ENCODE measurements at regions of chr14 and their contacts with region 1.

Region 1: DNA sequence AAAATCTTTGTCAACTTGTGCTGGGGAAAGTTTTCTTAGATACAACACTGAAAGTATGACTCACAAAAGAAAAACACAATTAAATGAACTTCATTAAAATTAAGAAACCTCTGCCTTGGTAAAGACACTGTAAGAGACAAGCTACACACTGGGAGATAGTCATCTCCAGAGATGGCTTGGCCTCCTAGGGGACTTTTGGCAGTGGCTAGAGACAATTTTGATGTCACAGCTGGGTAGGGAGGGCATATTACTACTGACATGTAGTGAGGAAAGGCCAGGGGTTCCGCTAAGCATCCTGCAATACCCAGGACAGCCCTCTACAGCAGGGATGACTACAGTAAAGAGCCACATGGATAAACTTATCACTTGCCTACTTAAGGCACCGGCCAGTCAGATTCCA is 8.7 kb upstream of the RNASE4 start:
- DNase-seq: no peak
- ATAC-seq: no peak
- H3K4me3 ChIP-seq: no peak overlapping the region
- H3K4me3 Mint-ChIP-seq: no peak overlapping the region
- H3K27ac ChIP-seq: no peak overlapping the region
- H3K27ac Mint-ChIP-seq: no peak overlapping the region
- H3K4me1 ChIP-seq: peaks cover 24 to 27% of the 10 kb centered on the region in 2 donors
- H3K4me1 Mint-ChIP-seq: peaks cover 28% of the 10 kb centered on the region
- H3K27me3 ChIP-seq: no peaks in the 10 kb centered on the region
- H3K27me3 Mint-ChIP-seq: no peaks in the 10 kb centered on the region
- CTCF ChIP-seq: no peak

Region 2: GRCh38 chr14:20662968-20663732 is 12.5 kb before region 1 on chr14:
- CTCF ChIA-PET with region 1: interaction called, 445 read pairs
- POLR2A ChIA-PET with region 1: interaction called, 42 read pairs
- intact Hi-C with region 1: no loop called
- DNase-seq: peak; percentile 90
- ATAC-seq: peak; percentile 85
- H3K4me3 ChIP-seq: peak overlapping the region; percentile 30 to 93 (median 64)
- H3K4me3 Mint-ChIP-seq: peak overlapping the region; percentile 93
- H3K27ac ChIP-seq: peak overlapping the region in 1 of 2 donors; percentile 34
- H3K27ac Mint-ChIP-seq: peak overlapping the region; percentile 62
- H3K4me1 ChIP-seq: peaks cover 39 to 55% of the 10 kb centered on the region in 2 donors
- H3K4me1 Mint-ChIP-seq: peaks cover 53% of the 10 kb centered on the region
- H3K27me3 ChIP-seq: peaks cover 0 to 7% (median 0%) of the 10 kb centered on the region in 4 experiments
- H3K27me3 Mint-ChIP-seq: no peaks in the 10 kb centered on the region
- CTCF ChIP-seq: peak; percentile 71

Region 3: GRCh38 chr14:21575661-21576060 is 900.0 kb after region 1 on chr14:
- CTCF ChIA-PET with region 1: no interaction called
- POLR2A ChIA-PET with region 1: no interaction called
- intact Hi-C with region 1: no loop called
- DNase-seq: no peak
- ATAC-seq: no peak
- H3K4me3 ChIP-seq: no peak overlapping the region
- H3K4me3 Mint-ChIP-seq: no peak overlapping the region
- H3K27ac ChIP-seq: no peak overlapping the region
- H3K27ac Mint-ChIP-seq: no peak overlapping the region
- H3K4me1 ChIP-seq: no peaks in the 10 kb centered on the region
- H3K4me1 Mint-ChIP-seq: no peaks in the 10 kb centered on the region
- H3K27me3 ChIP-seq: peaks cover 0 to 4% (median 0%) of the 10 kb centered on the region in 4 experiments
- H3K27me3 Mint-ChIP-seq: peaks cover 32% of the 10 kb centered on the region
- CTCF ChIP-seq: no peak

Measured in B cell (primary cell).